B cell (primary cell): ENCODE measurements at regions of chr11 and their contacts with region 1.

Region 1: DNA sequence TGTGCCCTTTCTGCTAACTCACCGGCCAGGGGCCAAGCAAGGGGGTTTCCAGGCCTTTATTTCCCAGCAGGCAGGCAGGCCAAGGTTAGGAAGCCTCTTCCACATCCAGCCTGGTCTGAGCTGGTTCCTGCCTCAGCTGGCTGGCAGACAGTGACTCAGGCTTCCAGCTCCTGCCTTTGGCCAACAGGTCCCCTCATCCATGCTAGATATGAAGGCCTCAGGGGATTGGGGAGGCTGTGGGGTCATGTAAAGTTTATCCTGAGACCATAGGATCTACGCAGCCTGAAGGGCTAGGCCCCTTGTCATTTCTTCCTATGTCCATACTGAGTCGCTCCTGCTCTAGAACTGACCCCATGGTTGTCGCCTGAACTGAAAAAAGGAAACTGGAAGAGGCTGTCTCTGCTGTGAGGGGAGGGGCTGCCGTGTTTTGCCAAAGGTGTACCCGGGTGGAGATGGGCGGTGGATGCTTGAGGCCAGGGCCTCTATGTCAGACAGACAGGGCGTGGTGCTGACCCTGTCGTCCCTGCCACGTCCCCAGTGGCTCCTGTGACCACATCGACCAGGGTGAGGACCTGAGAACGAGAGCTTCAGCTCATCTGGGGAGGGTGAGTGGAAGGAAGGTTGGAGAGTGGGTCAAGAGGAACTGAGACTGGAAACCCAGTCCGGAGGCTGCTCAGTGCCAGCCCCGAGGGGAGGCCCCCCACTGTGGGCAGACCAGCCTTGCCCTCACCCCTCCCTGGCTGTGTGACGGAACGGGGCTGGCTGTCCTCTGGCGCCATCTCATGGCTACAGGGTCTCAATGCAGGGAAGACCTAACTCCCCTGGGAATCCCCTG is 17.0 kb downstream of the P2RY6 start:
- DNase-seq: peak; percentile 91
- ATAC-seq: peak; percentile 94
- H3K4me3 ChIP-seq: peak overlapping the region in 2 of 5 experiments; percentile 16 to 21
- H3K4me3 Mint-ChIP-seq: peak overlapping the region; percentile 85
- H3K27ac ChIP-seq: peak overlapping the region; percentile 67 to 71
- H3K27ac Mint-ChIP-seq: peak overlapping the region; percentile 89
- H3K4me1 ChIP-seq: peaks cover 23 to 32% of the 10 kb centered on the region in 2 donors
- H3K4me1 Mint-ChIP-seq: peaks cover 33% of the 10 kb centered on the region
- H3K27me3 ChIP-seq: peaks cover 0 to 11% (median 0%) of the 10 kb centered on the region in 4 experiments
- H3K27me3 Mint-ChIP-seq: peaks cover 6% of the 10 kb centered on the region
- CTCF ChIP-seq: peak; percentile 93

Region 2: GRCh38 chr11:72831513-72832300 is 457.4 kb before region 1 on chr11:
- CTCF ChIA-PET with region 1: interaction called, 3 read pairs
- POLR2A ChIA-PET with region 1: no interaction called
- intact Hi-C with region 1: loop called (anchors 1 kb)
- DNase-seq: peak; percentile 57
- ATAC-seq: peak; percentile 69
- H3K4me3 ChIP-seq: no peak overlapping the region
- H3K4me3 Mint-ChIP-seq: no peak overlapping the region
- H3K27ac ChIP-seq: peak overlapping the region; percentile 22 to 38
- H3K27ac Mint-ChIP-seq: peak overlapping the region; percentile 86
- H3K4me1 ChIP-seq: peaks cover 0 to 14% of the 10 kb centered on the region in 2 donors
- H3K4me1 Mint-ChIP-seq: peaks cover 24% of the 10 kb centered on the region
- H3K27me3 ChIP-seq: no peaks in the 10 kb centered on the region
- H3K27me3 Mint-ChIP-seq: no peaks in the 10 kb centered on the region
- CTCF ChIP-seq: peak; percentile 77

Region 3: GRCh38 chr11:72912253-72912652 is 376.8 kb before region 1 on chr11:
- CTCF ChIA-PET with region 1: no interaction called
- POLR2A ChIA-PET with region 1: no interaction called
- intact Hi-C with region 1: no loop called
- DNase-seq: no peak
- ATAC-seq: no peak
- H3K4me3 ChIP-seq: no peak overlapping the region
- H3K4me3 Mint-ChIP-seq: no peak overlapping the region
- H3K27ac ChIP-seq: no peak overlapping the region
- H3K27ac Mint-ChIP-seq: peak overlapping the region; percentile 6
- H3K4me1 ChIP-seq: no peaks in the 10 kb centered on the region
- H3K4me1 Mint-ChIP-seq: peaks cover 9% of the 10 kb centered on the region
- H3K27me3 ChIP-seq: no peaks in the 10 kb centered on the region
- H3K27me3 Mint-ChIP-seq: no peaks in the 10 kb centered on the region
- CTCF ChIP-seq: no peak

Region 4: GRCh38 chr11:73184953-73185671 is 104.0 kb before region 1 on chr11:
- CTCF ChIA-PET with region 1: interaction called, 65 read pairs
- POLR2A ChIA-PET with region 1: no interaction called
- intact Hi-C with region 1: loop called (anchors 1 kb)
- DNase-seq: peak; percentile 77
- ATAC-seq: peak; percentile 40
- H3K4me3 ChIP-seq: peak overlapping the region; percentile 1 to 37 (median 23)
- H3K4me3 Mint-ChIP-seq: peak overlapping the region; percentile 76
- H3K27ac ChIP-seq: no peak overlapping the region
- H3K27ac Mint-ChIP-seq: peak overlapping the region; percentile 46
- H3K4me1 ChIP-seq: peaks cover 22 to 43% of the 10 kb centered on the region in 2 donors
- H3K4me1 Mint-ChIP-seq: peaks cover 35% of the 10 kb centered on the region
- H3K27me3 ChIP-seq: no peaks in the 10 kb centered on the region
- H3K27me3 Mint-ChIP-seq: no peaks in the 10 kb centered on the region
- CTCF ChIP-seq: peak; percentile 88

Region 5: GRCh38 chr11:73252577-73253195 is 36.4 kb before region 1 on chr11:
- CTCF ChIA-PET with region 1: no interaction called
- POLR2A ChIA-PET with region 1: no interaction called
- intact Hi-C with region 1: no loop called
- DNase-seq: no peak
- ATAC-seq: peak; percentile 29
- H3K4me3 ChIP-seq: no peak overlapping the region
- H3K4me3 Mint-ChIP-seq: no peak overlapping the region
- H3K27ac ChIP-seq: no peak overlapping the region
- H3K27ac Mint-ChIP-seq: no peak overlapping the region
- H3K4me1 ChIP-seq: no peaks in the 10 kb centered on the region
- H3K4me1 Mint-ChIP-seq: peaks cover 6% of the 10 kb centered on the region
- H3K27me3 ChIP-seq: peaks cover 0 to 2% (median 0%) of the 10 kb centered on the region in 4 experiments
- H3K27me3 Mint-ChIP-seq: no peaks in the 10 kb centered on the region
- CTCF ChIP-seq: no peak

Region 6: DNA sequence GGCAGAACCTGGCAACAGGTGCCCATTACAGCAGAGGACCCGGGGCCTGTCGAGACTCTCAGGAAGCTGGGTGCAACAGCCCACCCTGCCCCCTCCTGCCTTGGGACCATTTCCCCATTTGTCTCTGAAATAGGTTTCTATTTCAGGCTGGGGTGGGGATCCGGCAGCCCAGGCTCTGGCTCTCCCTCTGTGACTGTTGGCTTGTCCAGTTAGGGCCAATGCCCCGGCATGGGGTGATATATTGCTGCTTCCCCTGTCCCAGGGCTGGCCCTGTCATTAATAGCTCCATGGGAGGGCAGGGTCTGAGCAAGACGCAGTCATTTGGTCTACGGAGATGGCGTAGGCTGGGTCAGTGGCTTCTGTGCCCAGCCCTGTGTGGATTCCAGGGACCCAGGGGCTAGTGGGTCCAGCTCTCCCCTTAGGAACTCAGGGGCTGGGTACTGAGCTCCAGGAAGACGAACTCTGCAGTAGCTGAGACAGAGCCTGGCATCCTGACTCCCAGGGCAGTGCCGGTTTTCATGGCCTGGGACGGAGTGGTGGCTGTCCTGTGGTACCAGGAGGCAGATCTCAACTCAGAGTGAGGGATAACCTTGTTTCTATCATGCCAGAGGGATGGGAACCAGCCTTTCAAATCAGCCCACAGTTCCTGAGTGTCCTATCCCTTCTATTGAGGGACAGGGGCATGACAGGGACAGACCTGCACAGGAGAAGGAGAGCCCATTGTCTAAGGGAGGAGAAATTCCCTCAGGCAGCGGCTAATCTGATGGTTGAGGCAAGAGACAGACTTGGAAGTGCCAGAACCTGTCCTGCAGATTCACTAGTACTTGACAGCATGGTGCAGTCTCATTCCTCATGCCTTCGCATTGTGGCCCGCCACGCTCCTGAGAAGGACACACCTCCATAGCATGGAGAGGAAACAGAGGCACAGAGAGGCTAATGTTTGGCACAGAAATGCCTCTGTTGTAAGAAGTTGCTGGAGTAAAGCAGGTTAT is 14.0 kb before region 1 on chr11:
- CTCF ChIA-PET with region 1: interaction called, 18 read pairs
- POLR2A ChIA-PET with region 1: no interaction called
- intact Hi-C with region 1: no loop called
- DNase-seq: no peak
- ATAC-seq: no peak
- H3K4me3 ChIP-seq: no peak overlapping the region
- H3K4me3 Mint-ChIP-seq: no peak overlapping the region
- H3K27ac ChIP-seq: no peak overlapping the region
- H3K27ac Mint-ChIP-seq: no peak overlapping the region
- H3K4me1 ChIP-seq: peaks cover 0 to 8% of the 10 kb centered on the region in 2 donors
- H3K4me1 Mint-ChIP-seq: peaks cover 12% of the 10 kb centered on the region
- H3K27me3 ChIP-seq: no peaks in the 10 kb centered on the region
- H3K27me3 Mint-ChIP-seq: no peaks in the 10 kb centered on the region
- CTCF ChIP-seq: no peak

Region 7: GRCh38 chr11:73335204-73335923 is 46.3 kb after region 1 on chr11:
- CTCF ChIA-PET with region 1: interaction called, 104 read pairs
- POLR2A ChIA-PET with region 1: interaction called, 7 read pairs
- intact Hi-C with region 1: no loop called
- DNase-seq: peak; percentile 81
- ATAC-seq: peak; percentile 81
- H3K4me3 ChIP-seq: no peak overlapping the region
- H3K4me3 Mint-ChIP-seq: no peak overlapping the region
- H3K27ac ChIP-seq: no peak overlapping the region
- H3K27ac Mint-ChIP-seq: no peak overlapping the region
- H3K4me1 ChIP-seq: no peaks in the 10 kb centered on the region
- H3K4me1 Mint-ChIP-seq: no peaks in the 10 kb centered on the region
- H3K27me3 ChIP-seq: peaks cover 0 to 8% (median 2%) of the 10 kb centered on the region in 4 experiments
- H3K27me3 Mint-ChIP-seq: no peaks in the 10 kb centered on the region
- CTCF ChIP-seq: peak; percentile 99